GM10248 (cell line): ENCODE measurements at regions of chr1 and their contacts with region 1.

Region 1: GRCh38 chr1:200620273-200621131 is at the start of gene KIF14:
- DNase-seq: peak; percentile 97
- CTCF ChIP-seq: no peak

Region 2: DNA sequence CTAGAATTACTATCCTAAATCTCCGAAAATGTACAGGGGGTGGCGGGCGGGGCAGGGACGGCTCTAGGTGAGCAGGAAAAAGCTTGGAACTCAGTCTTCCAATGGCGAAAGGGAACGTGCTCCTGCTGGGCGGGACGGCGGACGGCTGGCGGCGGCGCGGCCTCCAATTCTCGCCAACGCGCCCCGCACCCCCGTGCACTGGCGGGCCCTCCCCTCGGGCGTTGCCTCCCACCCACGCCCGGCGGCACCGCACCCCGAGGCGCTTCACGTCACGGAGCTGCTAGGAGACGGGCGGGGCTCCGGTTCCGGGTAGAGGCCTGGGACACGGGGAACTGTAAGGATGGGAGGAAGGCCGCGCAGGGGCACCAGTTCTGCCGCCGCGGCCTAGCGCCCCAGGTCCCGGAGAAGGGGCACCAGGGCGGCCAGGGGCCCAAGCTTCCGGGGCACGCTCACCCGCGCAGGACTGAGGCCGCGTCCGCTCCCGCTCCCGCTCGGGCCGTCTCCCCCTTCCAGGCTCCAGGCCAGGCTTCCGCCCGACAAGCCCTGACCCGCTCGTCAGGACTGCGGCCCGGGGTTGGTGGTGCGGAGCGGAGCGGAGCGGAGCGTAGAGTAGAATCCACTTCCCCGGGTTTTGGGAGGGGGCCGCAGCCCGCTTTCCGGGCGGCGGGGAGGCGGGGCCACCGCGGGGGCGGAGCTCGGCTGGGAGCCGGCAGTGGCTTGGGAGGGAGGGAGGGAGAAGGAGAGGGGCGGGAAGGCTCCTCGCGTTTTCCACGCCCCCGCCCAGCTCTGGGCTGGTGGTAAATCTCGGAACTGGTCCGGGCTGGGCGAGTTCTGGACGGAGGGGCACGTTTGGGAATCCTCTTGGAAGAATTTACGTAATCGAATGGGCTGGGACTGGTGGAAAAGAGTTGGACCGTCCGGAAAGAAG is 49.1 kb after region 1 on chr1 and contains the start of gene DDX59:
- CTCF ChIA-PET with region 1: interaction called, 31 read pairs
- POLR2A ChIA-PET with region 1: no interaction called
- DNase-seq: peak; percentile 97
- CTCF ChIP-seq: no peak

Region 3: GRCh38 chr1:200774735-200775444 is 154.4 kb after region 1 on chr1:
- CTCF ChIA-PET with region 1: interaction called, 15 read pairs
- POLR2A ChIA-PET with region 1: no interaction called
- DNase-seq: peak; percentile 34
- CTCF ChIP-seq: no peak

Region 4: GRCh38 chr1:200808846-200809245 is 188.3 kb after region 1 on chr1:
- CTCF ChIA-PET with region 1: interaction called, 76 read pairs
- POLR2A ChIA-PET with region 1: no interaction called
- DNase-seq: no peak
- CTCF ChIP-seq: no peak

Region 5: GRCh38 chr1:201053158-201053860 is 432.8 kb after region 1 on chr1:
- CTCF ChIA-PET with region 1: no interaction called
- POLR2A ChIA-PET with region 1: no interaction called
- DNase-seq: no peak
- CTCF ChIP-seq: peak; percentile 12